Mammary epithelial cell (primary cell): ENCODE measurements at regions of chr10 and their contacts with region 1.

Region 1: GRCh38 chr10:86710987-86711512 is 42.7 kb downstream of the LDB3 start:
- DNase-seq: peak; percentile 88
- H3K4me3 ChIP-seq: peak overlapping the region; percentile 63 to 72 (median 63)
- H3K27ac ChIP-seq: peak overlapping the region; percentile 48
- H3K4me1 ChIP-seq: peaks cover 15% of the 10 kb centered on the region
- H3K27me3 ChIP-seq: no peaks in the 10 kb centered on the region
- CTCF ChIP-seq: peak; percentile 50 to 77

Region 2: GRCh38 chr10:86334488-86335085 is 376.5 kb before region 1 on chr10:
- CTCF ChIA-PET with region 1: no interaction called
- dilution Hi-C with region 1: no loop called
- in situ Hi-C with region 1: no loop called
- intact Hi-C with region 1: no loop called
- DNase-seq: no peak
- H3K4me3 ChIP-seq: no peak overlapping the region
- H3K27ac ChIP-seq: no peak overlapping the region
- H3K4me1 ChIP-seq: no peaks in the 10 kb centered on the region
- H3K27me3 ChIP-seq: no peaks in the 10 kb centered on the region
- CTCF ChIP-seq: no peak

Region 3: GRCh38 chr10:86652361-86653202 is 58.5 kb before region 1 on chr10:
- CTCF ChIA-PET with region 1: no interaction called
- dilution Hi-C with region 1: loop called (anchors 10 kb)
- in situ Hi-C with region 1: no loop called
- intact Hi-C with region 1: no loop called
- DNase-seq: no peak
- H3K4me3 ChIP-seq: no peak overlapping the region
- H3K27ac ChIP-seq: no peak overlapping the region
- H3K4me1 ChIP-seq: peaks cover 22% of the 10 kb centered on the region
- H3K27me3 ChIP-seq: no peaks in the 10 kb centered on the region
- CTCF ChIP-seq: no peak

Region 4: GRCh38 chr10:86770417-86770960 is 59.4 kb after region 1 on chr10:
- CTCF ChIA-PET with region 1: no interaction called
- dilution Hi-C with region 1: no loop called
- in situ Hi-C with region 1: no loop called
- intact Hi-C with region 1: no loop called
- DNase-seq: no peak
- H3K4me3 ChIP-seq: no peak overlapping the region
- H3K27ac ChIP-seq: no peak overlapping the region
- H3K4me1 ChIP-seq: peaks cover 9% of the 10 kb centered on the region
- H3K27me3 ChIP-seq: no peaks in the 10 kb centered on the region
- CTCF ChIP-seq: no peak

Region 5: DNA sequence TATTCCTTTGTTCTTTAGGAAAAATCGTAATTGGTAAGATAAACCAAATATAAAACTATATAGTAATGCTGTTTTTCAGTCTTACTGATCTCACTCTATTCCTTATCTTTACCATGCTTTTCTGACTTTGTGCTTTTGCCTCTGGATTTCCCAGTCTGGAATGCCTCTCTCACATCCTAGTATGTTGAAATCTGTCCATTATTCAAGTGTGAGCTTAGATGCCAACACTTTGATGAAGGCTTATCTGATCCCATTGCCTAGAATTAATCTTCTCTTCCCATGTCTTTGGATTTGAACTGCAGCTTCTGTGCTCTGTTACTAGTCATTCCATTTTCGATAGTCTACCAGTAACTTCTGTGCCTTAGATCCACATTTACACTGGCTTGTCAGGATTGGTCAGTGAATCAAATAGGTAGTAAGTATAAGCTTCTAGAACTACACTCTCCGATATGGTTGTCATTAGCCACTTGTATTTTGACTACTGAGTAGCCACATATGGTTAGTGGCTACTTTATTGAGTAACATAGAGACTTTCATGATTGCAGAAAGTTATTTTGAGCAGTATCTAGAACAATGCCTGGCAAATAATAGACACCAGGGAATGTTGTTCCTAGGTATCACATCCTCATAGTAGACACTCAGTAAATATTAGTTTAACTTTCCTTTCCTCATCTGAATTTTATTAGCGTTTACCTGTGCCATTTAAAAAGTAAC is 138.3 kb after region 1 on chr10:
- CTCF ChIA-PET with region 1: no interaction called
- dilution Hi-C with region 1: loop called (anchors 10 kb)
- in situ Hi-C with region 1: no loop called
- intact Hi-C with region 1: no loop called
- DNase-seq: no peak
- H3K4me3 ChIP-seq: no peak overlapping the region
- H3K27ac ChIP-seq: no peak overlapping the region
- H3K4me1 ChIP-seq: peaks cover 3% of the 10 kb centered on the region
- H3K27me3 ChIP-seq: no peaks in the 10 kb centered on the region
- CTCF ChIP-seq: no peak

Region 6: GRCh38 chr10:86899670-86900276 is 188.7 kb after region 1 on chr10:
- CTCF ChIA-PET with region 1: no interaction called
- dilution Hi-C with region 1: loop called (anchors 10 kb)
- in situ Hi-C with region 1: no loop called
- intact Hi-C with region 1: loop called (anchors 1 kb)
- DNase-seq: peak; percentile 44
- H3K4me3 ChIP-seq: no peak overlapping the region
- H3K27ac ChIP-seq: no peak overlapping the region
- H3K4me1 ChIP-seq: no peaks in the 10 kb centered on the region
- H3K27me3 ChIP-seq: no peaks in the 10 kb centered on the region
- CTCF ChIP-seq: peak; percentile 72 to 88

Region 7: GRCh38 chr10:86960003-86960862 is 249.2 kb after region 1 on chr10:
- CTCF ChIA-PET with region 1: interaction called, 4 read pairs
- dilution Hi-C with region 1: no loop called
- in situ Hi-C with region 1: no loop called
- intact Hi-C with region 1: loop called (anchors 2 kb)
- DNase-seq: peak; percentile 49
- H3K4me3 ChIP-seq: no peak overlapping the region
- H3K27ac ChIP-seq: peak overlapping the region; percentile 71
- H3K4me1 ChIP-seq: peaks cover 51% of the 10 kb centered on the region
- H3K27me3 ChIP-seq: no peaks in the 10 kb centered on the region
- CTCF ChIP-seq: peak; percentile 99 to 100